Activated T-helper 1 cell treated with anti-CD3 and anti-CD28 coated beads, Interleukin-12 subunit alpha, Interleukin-12 subunit beta, Interleukin-2, Interleukin-4 antibody, amounts not matched to agents 30 ng/mL and 10 ng/mL and 1 ng/mL, durations not matched to agents 14 hours and 24 hours and 36 hours (primary cell): ENCODE measurements at regions of chr18 and their contacts with region 1.

Region 1: GRCh38 chr18:49813319-49814146 is at the start of gene ACAA2:
- DNase-seq: peak; percentile 80
- H3K4me3 Mint-ChIP-seq: peak within 1 kb of the TSS; percentile 97
- H3K27ac Mint-ChIP-seq: peak within 1 kb of the TSS; percentile 98
- H3K4me1 Mint-ChIP-seq: peaks cover 61% of the 10 kb centered on the region
- H3K27me3 Mint-ChIP-seq: no peaks in the 10 kb centered on the region
- total RNA-seq, gene ACAA2: 74.3 and 74.6 TPM in 2 replicates

Region 2: GRCh38 chr18:48813833-48814489 is 999.6 kb before region 1 on chr18:
- intact Hi-C with region 1: loop called (anchors 10 kb)
- DNase-seq: peak; percentile 36
- H3K4me3 Mint-ChIP-seq: peak overlapping the region; percentile 40
- H3K27ac Mint-ChIP-seq: peak overlapping the region; percentile 90
- H3K4me1 Mint-ChIP-seq: peaks cover 62% of the 10 kb centered on the region
- H3K27me3 Mint-ChIP-seq: peaks cover 4% of the 10 kb centered on the region

Region 3: GRCh38 chr18:49459404-49460171 is 353.9 kb before region 1 on chr18:
- intact Hi-C with region 1: loop called (anchors 1 kb)
- DNase-seq: no peak
- H3K4me3 Mint-ChIP-seq: peak overlapping the region; percentile 87
- H3K27ac Mint-ChIP-seq: peak overlapping the region; percentile 74
- H3K4me1 Mint-ChIP-seq: peaks cover 37% of the 10 kb centered on the region
- H3K27me3 Mint-ChIP-seq: peaks cover 5% of the 10 kb centered on the region

Region 4: DNA sequence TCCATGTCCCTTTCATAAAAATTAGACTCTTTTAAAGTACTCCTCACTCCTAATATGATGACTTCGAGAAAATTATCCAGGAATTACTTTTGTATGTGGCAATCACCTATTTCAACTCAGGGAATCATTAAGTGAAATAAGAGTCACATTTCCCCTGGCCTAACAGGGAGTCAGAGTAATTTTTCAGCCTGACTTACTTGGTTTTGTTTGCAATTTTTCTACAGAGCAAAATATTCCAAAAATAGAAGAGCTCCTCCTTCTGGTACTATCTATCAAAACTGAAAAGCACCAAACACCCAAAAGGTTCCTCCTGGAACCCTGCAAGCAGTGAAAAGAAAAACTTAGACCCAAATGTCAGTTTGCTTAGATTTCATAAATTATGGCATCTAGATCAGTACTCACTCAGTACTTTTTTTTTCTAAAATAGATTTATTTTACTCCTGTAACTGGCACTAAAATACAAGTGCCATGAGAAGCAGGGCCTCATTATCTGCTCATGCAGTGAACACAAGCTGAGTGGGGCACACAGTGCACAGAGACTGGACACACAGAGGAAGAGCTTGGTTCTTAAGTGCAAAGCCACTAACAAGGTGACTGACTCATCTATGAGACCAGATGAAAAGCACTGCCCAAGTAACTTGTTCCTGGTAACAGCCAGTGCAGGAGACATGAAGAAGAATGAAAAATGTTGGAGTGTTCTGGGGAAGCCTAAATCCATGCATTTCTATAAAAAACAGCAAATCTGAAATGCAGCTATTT is 28.9 kb before region 1 on chr18:
- intact Hi-C with region 1: loop called (anchors 1 kb)
- DNase-seq: no peak
- H3K4me3 Mint-ChIP-seq: no peak overlapping the region
- H3K27ac Mint-ChIP-seq: no peak overlapping the region
- H3K4me1 Mint-ChIP-seq: peaks cover 43% of the 10 kb centered on the region
- H3K27me3 Mint-ChIP-seq: no peaks in the 10 kb centered on the region

Region 5: DNA sequence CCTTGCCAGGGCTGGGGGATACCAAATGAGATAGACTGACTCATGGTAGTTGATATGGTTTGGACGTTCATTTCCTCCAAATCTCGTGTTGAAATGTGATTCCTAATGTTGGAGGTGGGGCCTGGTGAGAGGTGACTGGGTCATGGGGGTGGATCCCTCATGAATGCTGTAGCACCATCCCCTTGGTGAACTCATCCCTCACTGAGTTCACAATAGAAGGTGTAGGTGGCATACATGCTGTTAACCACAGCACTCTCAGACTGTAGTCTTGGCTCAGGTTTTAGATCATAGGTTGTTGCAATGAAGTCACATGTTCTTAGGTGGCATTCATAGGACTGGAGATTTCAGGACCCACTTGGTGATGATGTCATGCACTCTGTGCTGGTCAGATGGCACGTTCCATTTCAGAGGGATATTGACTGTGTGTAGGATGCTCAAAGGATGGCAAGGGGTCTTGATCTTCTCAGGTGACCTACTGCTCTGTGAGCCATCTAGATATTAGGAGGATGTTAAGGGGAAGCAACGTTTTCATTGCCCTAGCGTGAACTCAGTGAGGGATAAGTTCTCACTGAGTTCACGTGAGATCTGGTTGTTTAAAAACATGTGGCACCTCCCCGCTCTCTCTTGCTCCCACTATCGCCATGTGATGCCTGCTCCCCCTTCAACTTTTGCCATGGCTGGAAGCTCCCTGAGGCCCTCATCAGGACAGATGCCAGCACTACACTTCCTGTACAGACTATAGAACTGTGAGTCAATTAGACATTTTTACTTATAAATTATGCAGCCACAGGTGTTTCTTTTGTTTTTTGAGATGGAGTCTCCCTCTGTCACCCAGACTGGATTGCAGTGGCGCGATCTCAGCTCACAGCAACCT is 73.6 kb after region 1 on chr18:
- intact Hi-C with region 1: no loop called
- DNase-seq: no peak
- H3K4me3 Mint-ChIP-seq: no peak overlapping the region
- H3K27ac Mint-ChIP-seq: no peak overlapping the region
- H3K4me1 Mint-ChIP-seq: no peaks in the 10 kb centered on the region
- H3K27me3 Mint-ChIP-seq: peaks cover 12% of the 10 kb centered on the region

Region 6: GRCh38 chr18:50111265-50111792 is 297.8 kb after region 1 on chr18:
- intact Hi-C with region 1: no loop called
- DNase-seq: no peak
- H3K4me3 Mint-ChIP-seq: no peak overlapping the region
- H3K27ac Mint-ChIP-seq: no peak overlapping the region
- H3K4me1 Mint-ChIP-seq: no peaks in the 10 kb centered on the region
- H3K27me3 Mint-ChIP-seq: peaks cover 12% of the 10 kb centered on the region

Region 7: GRCh38 chr18:50266248-50266704 is 452.7 kb after region 1 on chr18 and contains the start of gene CFAP53:
- intact Hi-C with region 1: loop called (anchors 5 kb)
- DNase-seq: peak; percentile 77
- H3K4me3 Mint-ChIP-seq: peak within 1 kb of the TSS; percentile 86
- H3K27ac Mint-ChIP-seq: peak within 1 kb of the TSS; percentile 70
- H3K4me1 Mint-ChIP-seq: peaks cover 30% of the 10 kb centered on the region
- H3K27me3 Mint-ChIP-seq: peaks cover 3% of the 10 kb centered on the region
- total RNA-seq, gene CFAP53: 0.31 and 0.34 TPM in 2 replicates

Region 8: GRCh38 chr18:50878345-50879301 is 1065.1 kb after region 1 on chr18 and contains the start of gene ME2:
- intact Hi-C with region 1: loop called (anchors 5 kb)
- DNase-seq: peak; percentile 87
- H3K4me3 Mint-ChIP-seq: peak within 1 kb of the TSS; percentile 99
- H3K27ac Mint-ChIP-seq: peak within 1 kb of the TSS; percentile 99
- H3K4me1 Mint-ChIP-seq: peaks cover 16% of the 10 kb centered on the region
- H3K27me3 Mint-ChIP-seq: no peaks in the 10 kb centered on the region
- total RNA-seq, gene ME2: 122 and 129 TPM in 2 replicates